PC-9 (cell line): ENCODE measurements at regions of chr4 and their contacts with region 1.

Region 1: DNA sequence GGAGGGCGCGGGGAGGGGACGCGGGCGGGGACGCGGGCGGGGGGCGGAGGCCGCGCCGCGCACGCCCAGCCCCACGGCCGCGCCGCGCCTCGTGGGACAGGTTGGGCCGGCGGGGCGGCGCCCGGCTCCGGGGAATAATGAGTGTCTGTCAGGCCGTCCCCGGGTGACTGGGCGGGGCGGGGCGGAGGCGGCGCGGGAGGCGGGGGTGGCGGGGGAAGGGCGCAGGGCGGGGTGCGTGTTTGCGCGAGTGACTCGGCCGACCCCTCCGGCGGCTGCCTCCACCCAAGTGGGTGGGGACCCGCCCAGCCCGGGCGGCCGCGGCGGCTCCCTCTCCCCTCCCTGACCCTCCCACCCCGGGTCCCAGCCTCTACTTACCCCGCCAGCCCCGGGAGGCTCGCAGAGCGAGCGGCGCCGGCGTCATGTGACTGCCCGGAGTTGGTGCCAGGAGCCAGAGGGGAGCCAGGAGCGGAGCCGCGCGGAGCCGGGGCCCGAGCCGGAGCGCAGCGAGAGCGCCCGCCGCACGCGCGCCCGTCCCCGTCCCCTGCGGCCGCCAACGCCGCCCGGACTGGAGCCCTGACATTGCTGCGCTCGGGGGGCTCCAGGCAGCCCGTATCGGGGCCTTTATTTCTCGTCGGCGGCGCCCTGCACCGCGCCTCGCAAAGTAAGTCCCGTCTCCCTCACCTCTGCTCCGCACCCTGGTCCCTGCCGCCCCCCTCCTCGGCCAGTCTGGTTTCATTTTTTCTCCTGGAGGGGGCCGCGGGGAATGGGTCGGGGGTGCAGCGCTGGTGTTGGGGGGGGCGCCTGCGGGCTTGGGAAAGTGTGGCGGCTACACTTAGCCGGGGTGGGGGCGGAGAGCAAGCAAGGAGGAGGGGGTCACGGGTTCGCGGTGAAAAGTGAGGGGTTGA is at the start of gene KLF3:
- DNase-seq: peak; percentile 59 to 92
- H3K4me3 ChIP-seq: peak within 1 kb of the TSS; percentile 72
- H3K27ac ChIP-seq: peak within 1 kb of the TSS; percentile 96
- H3K4me1 ChIP-seq: peaks cover 34% of the 10 kb centered on the region
- H3K27me3 ChIP-seq: no peaks in the 10 kb centered on the region
- CTCF ChIP-seq: no peak
- total RNA-seq, gene KLF3: 33.1 and 37.5 TPM in 2 replicates

Region 2: GRCh38 chr4:38078590-38079421 is 585.2 kb before region 1 on chr4:
- CTCF ChIA-PET with region 1: no interaction called
- POLR2A ChIA-PET with region 1: no interaction called
- intact Hi-C with region 1: loop called (anchors 5 kb)
- DNase-seq: peak in 1 of 2 experiments; percentile 89
- H3K4me3 ChIP-seq: no peak overlapping the region
- H3K27ac ChIP-seq: peak overlapping the region; percentile 80
- H3K4me1 ChIP-seq: peaks cover 81% of the 10 kb centered on the region
- H3K27me3 ChIP-seq: no peaks in the 10 kb centered on the region
- CTCF ChIP-seq: no peak

Region 3: DNA sequence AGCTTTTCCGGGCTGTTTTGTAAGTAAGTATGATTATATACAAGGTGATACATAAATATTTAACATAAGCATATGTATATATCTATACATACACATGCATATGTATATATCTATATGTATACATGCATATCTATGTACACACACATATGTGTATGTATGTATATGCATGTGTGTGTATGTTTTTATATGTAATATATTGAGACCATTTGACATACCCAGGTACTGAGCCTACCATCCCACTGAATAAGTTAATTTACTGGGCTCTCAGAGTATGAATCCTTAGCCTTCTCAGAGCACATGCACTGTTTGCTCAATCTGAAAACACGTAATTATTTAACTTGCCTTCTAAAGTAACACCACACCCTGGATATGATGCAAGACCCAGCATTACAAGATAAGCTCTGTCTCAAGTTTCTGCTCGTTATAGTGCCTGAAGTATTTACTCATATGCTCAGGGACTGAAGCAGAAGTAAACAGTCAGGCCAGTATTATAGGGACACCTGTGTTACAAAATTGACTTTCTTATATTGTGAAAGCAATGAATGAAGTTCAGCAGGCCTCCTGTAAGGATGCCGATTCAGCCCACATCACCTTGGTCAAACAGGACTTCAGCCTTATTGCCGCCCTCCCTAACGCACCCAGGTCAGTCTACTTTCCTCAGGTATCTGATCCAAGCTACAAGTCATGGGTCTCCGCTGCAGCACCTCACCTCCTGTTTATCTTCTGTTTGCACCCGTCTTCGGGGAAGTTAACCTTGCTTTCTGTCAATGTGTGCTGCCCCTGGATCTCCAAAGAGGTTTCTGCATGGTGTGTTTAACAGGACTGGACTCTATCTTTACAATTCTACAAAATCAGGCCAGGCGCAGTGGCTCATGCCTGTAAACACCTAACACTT is 43.0 kb before region 1 on chr4:
- CTCF ChIA-PET with region 1: no interaction called
- POLR2A ChIA-PET with region 1: no interaction called
- intact Hi-C with region 1: loop called (anchors 2 kb)
- DNase-seq: peak; percentile 41 to 99
- H3K4me3 ChIP-seq: peak overlapping the region; percentile 31; the same call in 1 of the 2 replicates
- H3K27ac ChIP-seq: peak overlapping the region; percentile 78
- H3K4me1 ChIP-seq: peaks cover 54% of the 10 kb centered on the region
- H3K27me3 ChIP-seq: no peaks in the 10 kb centered on the region
- CTCF ChIP-seq: no peak

Region 4: DNA sequence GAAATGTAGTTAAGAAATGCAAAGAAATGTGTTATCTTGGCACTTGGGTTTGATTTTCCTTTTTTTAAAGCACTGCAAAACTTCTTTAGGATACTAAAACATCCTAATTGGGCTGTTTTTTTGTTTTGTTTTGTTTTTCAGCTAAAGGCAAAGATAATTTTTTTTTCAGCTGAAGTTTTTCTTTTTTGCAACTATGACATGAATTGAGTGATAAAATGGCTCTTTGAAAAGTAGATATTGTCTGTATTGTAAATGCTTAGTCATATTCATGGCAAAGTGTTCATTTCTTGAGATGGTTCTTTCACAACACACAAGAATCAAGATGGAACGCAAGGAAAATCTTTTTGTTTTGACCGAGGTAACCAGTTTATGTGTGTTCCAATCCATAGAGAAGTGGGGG is 35.1 kb after region 1 on chr4:
- CTCF ChIA-PET with region 1: no interaction called
- POLR2A ChIA-PET with region 1: no interaction called
- intact Hi-C with region 1: loop called (anchors 1 kb)
- DNase-seq: no peak
- H3K4me3 ChIP-seq: no peak overlapping the region
- H3K27ac ChIP-seq: peak overlapping the region; percentile 33; the same call in 1 of the 2 replicates
- H3K4me1 ChIP-seq: peaks cover 17% of the 10 kb centered on the region
- H3K27me3 ChIP-seq: no peaks in the 10 kb centered on the region
- CTCF ChIP-seq: no peak

Region 5: GRCh38 chr4:39032218-39033085 is 368.4 kb after region 1 on chr4 and contains the start of gene TMEM156:
- CTCF ChIA-PET with region 1: no interaction called
- POLR2A ChIA-PET with region 1: no interaction called
- intact Hi-C with region 1: loop called (anchors 10 kb)
- DNase-seq: peak; percentile 26 to 93
- H3K4me3 ChIP-seq: peak within 1 kb of the TSS; percentile 71
- H3K27ac ChIP-seq: peak within 1 kb of the TSS; percentile 98
- H3K4me1 ChIP-seq: peaks cover 68% of the 10 kb centered on the region
- H3K27me3 ChIP-seq: no peaks in the 10 kb centered on the region
- CTCF ChIP-seq: no peak
- total RNA-seq, gene TMEM156: 20.1 and 29.3 TPM in 2 replicates